ENCODE measurements at regions of chr13 and their contacts with region 1.

Region 1: GRCh38 chr13:40190641-40191100 is 475.8 kb downstream of the FOXO1 start:
- DNase-seq: peak; percentile 58
- H3K4me3 Mint-ChIP-seq: peak overlapping the region; percentile 35
- H3K27ac Mint-ChIP-seq: peak overlapping the region; percentile 87
- H3K4me1 Mint-ChIP-seq: peaks cover 66% of the 10 kb centered on the region
- H3K27me3 Mint-ChIP-seq: no peaks in the 10 kb centered on the region

Region 2: DNA sequence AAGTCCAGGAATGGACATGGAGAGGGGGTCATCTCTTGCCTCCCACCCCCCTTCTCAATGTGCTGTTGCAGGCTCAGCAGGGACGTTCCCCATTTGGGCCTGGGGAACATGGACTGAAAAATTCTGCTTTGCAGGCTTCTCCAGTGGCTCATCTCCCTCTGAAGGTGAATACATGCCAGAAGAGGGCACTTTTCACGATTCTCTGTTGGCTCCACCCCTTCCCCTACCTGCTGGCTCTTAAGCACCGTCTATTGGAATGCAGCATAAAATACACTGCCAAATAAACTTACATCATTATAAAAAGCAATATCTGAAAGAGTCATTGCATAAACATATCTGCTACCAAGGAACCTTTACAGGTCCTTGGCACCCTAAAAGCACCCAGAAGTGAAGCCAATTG is 1116.7 kb before region 1 on chr13:
- intact Hi-C with region 1: no loop called
- DNase-seq: no peak
- H3K4me3 Mint-ChIP-seq: no peak overlapping the region
- H3K27ac Mint-ChIP-seq: no peak overlapping the region
- H3K4me1 Mint-ChIP-seq: no peaks in the 10 kb centered on the region
- H3K27me3 Mint-ChIP-seq: peaks cover 26% of the 10 kb centered on the region

Region 3: DNA sequence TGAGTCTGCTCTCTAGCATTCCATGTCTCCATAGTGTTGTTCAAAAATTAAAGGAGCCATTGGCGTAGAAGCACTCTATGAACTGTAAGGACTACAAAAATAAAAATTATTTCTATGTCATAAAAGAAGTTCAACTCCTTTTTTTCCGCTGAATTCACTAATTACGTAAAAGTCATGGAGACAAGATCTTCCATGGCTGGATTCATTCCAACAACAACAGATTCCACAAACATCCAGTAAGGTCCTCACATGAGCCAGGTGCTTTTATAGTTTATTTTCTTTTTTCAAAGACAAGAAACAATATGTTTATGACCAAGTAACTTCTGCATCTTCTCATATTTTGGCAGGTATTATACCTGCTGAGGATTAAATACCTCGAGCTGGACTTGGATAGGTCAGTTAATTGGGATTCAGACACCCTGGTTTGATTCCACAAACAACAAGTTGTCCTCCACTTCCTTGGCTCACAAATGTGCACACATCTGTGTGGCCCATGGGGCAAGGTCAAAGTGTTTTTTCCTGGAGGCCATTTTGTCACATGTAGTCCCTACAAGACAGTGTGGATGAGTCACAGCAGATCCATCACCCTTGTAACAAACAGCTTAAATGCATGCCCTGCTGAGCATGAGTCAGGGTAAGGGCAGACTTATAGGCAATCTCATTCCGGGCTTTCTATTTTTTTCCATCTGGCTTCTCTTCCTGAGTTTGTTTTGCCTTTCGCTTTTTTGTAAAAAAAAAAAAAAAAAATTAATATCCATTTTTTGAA is 59.6 kb before region 1 on chr13:
- intact Hi-C with region 1: loop called (anchors 5 kb)
- DNase-seq: no peak
- H3K4me3 Mint-ChIP-seq: no peak overlapping the region
- H3K27ac Mint-ChIP-seq: peak overlapping the region; percentile 12
- H3K4me1 Mint-ChIP-seq: peaks cover 63% of the 10 kb centered on the region
- H3K27me3 Mint-ChIP-seq: no peaks in the 10 kb centered on the region

Region 4: DNA sequence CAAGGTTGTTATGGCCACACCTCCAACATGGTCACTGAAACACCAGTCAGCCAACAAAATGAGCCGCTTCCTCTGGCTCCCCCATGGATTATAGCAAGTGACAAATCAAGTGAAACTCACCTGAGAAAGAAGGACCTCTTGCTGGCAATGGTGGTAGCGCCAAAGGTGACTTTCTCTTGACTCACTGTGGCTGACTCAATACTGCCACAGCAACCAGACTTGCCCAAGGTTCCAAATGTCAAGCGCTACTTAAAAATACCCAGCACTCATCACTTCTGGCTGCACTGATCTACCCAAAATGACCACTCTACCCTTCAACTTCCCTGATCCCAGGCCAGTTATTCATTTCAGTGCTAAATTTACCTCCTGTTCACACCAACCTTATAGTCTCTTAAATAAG is 19.7 kb before region 1 on chr13:
- intact Hi-C with region 1: loop called (anchors 2 kb)
- DNase-seq: no peak
- H3K4me3 Mint-ChIP-seq: no peak overlapping the region
- H3K27ac Mint-ChIP-seq: no peak overlapping the region
- H3K4me1 Mint-ChIP-seq: peaks cover 31% of the 10 kb centered on the region
- H3K27me3 Mint-ChIP-seq: peaks cover 2% of the 10 kb centered on the region

Region 5: DNA sequence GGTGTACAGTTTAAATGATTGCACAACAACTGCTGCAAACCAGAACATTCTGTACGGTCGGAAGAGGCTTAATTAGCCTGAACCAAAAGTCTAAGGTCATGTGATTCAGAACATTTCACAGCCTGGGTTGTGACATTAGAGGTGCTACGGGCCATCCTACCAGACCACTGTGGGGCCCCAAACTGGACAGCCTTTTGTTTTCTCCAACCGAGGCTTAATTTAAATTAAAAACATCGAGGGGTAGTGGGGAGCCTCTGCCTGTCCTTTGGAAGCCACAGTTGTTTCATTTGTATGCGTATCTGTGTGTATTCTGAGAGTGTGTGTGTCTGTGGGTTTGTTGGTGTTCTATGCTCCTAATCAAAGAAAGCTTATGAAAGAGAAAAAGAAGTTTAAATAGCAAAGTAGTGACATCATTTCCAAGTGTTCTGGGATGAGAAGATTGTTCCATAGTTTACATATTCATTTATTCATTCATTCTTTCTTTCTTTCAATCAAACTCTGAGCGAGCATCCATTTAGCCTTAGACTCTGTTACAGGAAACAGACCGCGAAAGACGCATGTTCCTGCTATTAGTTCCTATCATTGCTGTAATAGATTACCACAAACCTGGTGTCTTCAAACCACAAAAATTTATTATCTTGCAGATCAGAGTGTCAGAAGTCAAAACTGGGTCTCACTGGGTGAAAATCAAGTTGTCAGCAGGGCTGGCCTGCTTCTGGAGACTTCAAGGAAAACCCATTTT is 31.0 kb after region 1 on chr13:
- intact Hi-C with region 1: loop called (anchors 1 kb)
- DNase-seq: no peak
- H3K4me3 Mint-ChIP-seq: peak overlapping the region; percentile 37
- H3K27ac Mint-ChIP-seq: peak overlapping the region; percentile 69
- H3K4me1 Mint-ChIP-seq: peaks cover 43% of the 10 kb centered on the region
- H3K27me3 Mint-ChIP-seq: no peaks in the 10 kb centered on the region

Region 6: GRCh38 chr13:40388617-40389016 is 197.9 kb after region 1 on chr13:
- intact Hi-C with region 1: loop called (anchors 2 kb)
- DNase-seq: peak; percentile 79
- H3K4me3 Mint-ChIP-seq: peak overlapping the region; percentile 76
- H3K27ac Mint-ChIP-seq: peak overlapping the region; percentile 96
- H3K4me1 Mint-ChIP-seq: peaks cover 56% of the 10 kb centered on the region
- H3K27me3 Mint-ChIP-seq: no peaks in the 10 kb centered on the region